Vagina (tissue), 2 donors: ENCODE measurements at regions of chr1 and their contacts with region 1.

Region 1: DNA sequence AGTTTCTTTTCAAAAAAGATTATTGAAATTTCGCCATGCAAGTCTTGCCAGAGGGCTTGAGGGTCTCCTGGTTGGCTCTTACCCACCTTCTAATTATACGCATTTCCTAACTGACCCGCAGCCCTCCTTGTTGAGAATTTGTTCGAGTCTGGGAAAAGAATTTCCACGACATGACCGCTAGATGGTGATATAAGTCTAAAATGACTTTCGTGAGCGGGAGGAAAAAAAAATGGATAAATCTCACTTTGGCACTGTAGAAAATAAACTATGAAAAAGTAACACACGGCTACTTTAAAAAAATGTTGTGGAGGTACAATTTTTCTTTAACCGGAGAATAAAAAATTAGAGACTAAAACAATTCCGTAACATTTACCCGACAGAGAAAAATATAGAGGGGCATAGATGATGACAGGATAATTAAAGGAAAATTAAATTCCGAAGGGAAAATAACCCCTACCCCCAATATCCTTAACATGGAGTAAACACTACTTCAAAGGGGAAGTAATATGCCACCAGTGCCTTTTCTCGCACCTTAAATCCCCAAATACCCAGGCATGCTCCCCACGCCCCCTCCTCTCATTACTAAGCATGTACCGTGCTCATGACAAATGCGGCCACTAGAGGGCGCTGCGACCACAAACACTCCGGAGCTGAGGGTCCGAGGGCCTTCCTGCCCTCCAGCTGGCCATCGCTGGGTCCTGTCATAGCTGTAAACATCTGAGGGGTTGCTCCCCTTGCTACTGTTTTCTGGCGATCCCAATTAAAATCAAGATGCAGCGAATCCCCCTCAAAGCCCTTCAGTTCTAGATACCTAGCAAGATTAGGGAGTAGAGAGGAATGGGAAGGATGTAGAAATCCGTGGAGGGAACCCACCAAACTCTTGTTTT is 266.9 kb downstream of the ASTN1 start:
- DNase-seq: no peak
- H3K4me3 ChIP-seq: no peak overlapping the region
- H3K27ac ChIP-seq: no peak overlapping the region
- H3K4me1 ChIP-seq: no peaks in the 10 kb centered on the region
- H3K27me3 ChIP-seq: no peaks in the 10 kb centered on the region
- CTCF ChIP-seq: peak; percentile 37 to 75 (median 68)
- POLR2A ChIP-seq: no peak

Region 2: GRCh38 chr1:176628775-176629174 is 268.8 kb before region 1 on chr1:
- intact Hi-C with region 1: no loop called
- DNase-seq: no peak
- H3K4me3 ChIP-seq: no peak overlapping the region
- H3K27ac ChIP-seq: no peak overlapping the region
- H3K4me1 ChIP-seq: no peaks in the 10 kb centered on the region
- H3K27me3 ChIP-seq: no peaks in the 10 kb centered on the region
- CTCF ChIP-seq: no peak
- POLR2A ChIP-seq: no peak

Region 3: DNA sequence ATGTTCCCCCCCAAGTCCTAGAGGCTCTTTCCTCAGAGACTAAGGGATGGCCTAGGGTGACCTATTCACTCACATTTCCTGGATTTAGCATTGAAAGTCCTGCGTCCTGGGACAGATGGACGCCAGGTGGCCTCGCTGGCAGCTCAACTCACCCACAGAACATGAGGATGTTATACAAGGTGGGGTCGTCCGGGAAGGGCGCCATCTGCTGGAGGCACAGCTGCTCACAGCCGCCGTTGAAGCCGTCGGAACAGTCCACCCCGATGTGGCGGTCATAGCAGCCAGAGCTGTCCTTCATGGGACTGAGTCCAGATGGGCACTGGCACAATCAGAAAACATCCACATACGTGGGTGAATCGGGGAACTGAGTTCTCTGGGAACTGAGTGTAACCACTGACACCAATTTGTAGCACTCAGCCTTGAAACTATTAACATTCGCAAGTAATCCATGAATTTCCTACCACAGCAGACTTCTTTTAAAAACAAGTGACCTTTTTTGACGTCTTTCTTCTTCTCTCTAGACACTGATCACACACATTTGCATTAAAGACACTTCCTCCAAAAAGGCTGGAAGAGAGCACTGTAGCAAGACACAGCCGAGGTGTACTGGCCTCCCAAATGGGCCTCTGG is 51.6 kb after region 1 on chr1:
- intact Hi-C with region 1: no loop called
- DNase-seq: no peak
- H3K4me3 ChIP-seq: no peak overlapping the region
- H3K27ac ChIP-seq: no peak overlapping the region
- H3K4me1 ChIP-seq: no peaks in the 10 kb centered on the region
- H3K27me3 ChIP-seq: no peaks in the 10 kb centered on the region
- CTCF ChIP-seq: no peak
- POLR2A ChIP-seq: no peak

Region 4: GRCh38 chr1:177937931-177938330 is 1040.3 kb after region 1 on chr1:
- intact Hi-C with region 1: loop called (anchors 10 kb)
- DNase-seq: no peak
- H3K4me3 ChIP-seq: no peak overlapping the region
- H3K27ac ChIP-seq: no peak overlapping the region
- H3K4me1 ChIP-seq: no peaks in the 10 kb centered on the region
- H3K27me3 ChIP-seq: no peaks in the 10 kb centered on the region
- CTCF ChIP-seq: no peak
- POLR2A ChIP-seq: no peak